Activated CD4-positive, alpha-beta T cell treated with anti-CD3 and anti-CD28 coated beads, Interleukin-2, amount 10 ng/mL, durations not matched to agents 24 days and 14 days (primary cell): ENCODE measurements at regions of chr1 and their contacts with region 1.

Region 1: GRCh38 chr1:66137235-66137634 is 344.5 kb downstream of the PDE4B start:
- DNase-seq: no peak
- H3K4me3 Mint-ChIP-seq: no peak overlapping the region
- H3K27ac Mint-ChIP-seq: no peak overlapping the region
- H3K4me1 Mint-ChIP-seq: peaks cover 3% of the 10 kb centered on the region
- H3K27me3 Mint-ChIP-seq: peaks cover 5% of the 10 kb centered on the region

Region 2: DNA sequence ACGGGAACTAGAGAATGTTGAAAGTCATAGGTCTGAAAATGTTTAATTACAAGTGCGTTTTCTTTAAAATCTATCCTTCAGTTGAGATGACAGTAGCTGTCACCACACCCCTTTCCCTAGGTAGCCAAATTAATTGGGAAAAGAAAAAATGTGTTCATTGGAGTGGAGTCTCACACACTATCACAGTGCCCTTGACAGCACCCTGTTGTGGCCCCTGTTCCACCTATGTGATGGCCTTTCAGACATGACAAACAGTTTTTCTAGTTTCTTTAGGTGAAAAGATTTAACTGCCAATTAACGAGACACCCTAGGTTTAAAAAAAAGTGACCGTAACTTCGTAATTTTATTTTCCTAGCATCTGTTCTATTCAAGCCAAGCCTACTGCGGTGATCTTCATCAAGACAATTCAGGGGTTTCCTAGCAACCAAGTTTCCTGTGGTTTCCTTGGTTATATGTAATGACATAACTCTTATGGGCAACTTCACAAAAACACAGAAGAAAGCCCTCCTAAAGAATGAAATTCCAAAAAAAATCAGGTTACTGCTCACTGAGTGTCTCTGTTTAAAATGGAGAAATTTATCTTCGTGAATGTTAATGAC is 46.3 kb before region 1 on chr1:
- intact Hi-C with region 1: no loop called
- DNase-seq: peak; percentile 69
- H3K4me3 Mint-ChIP-seq: no peak overlapping the region
- H3K27ac Mint-ChIP-seq: no peak overlapping the region
- H3K4me1 Mint-ChIP-seq: peaks cover 2% of the 10 kb centered on the region
- H3K27me3 Mint-ChIP-seq: peaks cover 4% of the 10 kb centered on the region

Region 3: DNA sequence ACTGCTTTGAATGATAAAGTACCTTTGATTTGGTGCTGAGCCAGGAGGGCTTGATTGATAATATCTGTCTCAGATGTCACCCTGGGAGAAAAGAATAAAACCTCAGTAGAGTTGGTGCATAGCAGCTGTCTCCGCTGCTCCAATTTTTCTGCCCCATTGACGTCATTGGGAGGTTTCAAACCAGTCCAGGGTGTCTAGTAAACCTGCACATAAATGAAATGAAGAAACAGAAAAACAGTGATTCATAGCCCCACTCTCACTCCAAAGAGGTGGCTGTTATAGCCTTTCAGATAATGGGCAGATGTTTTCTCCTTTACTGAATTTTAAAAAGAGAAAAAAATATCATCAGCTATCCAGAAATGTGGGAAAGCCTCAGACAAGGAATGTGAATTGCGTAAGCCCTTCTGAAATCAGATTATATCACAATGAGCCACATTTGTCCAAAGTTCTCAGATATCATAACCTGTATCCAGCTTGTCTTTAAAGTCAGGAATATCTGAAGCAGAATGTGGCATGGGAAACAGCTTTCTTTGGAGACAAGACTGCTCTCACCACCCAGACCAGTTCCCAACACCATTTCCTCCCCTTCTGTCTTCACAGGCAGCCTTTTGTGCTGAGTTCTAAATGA is 45.4 kb after region 1 on chr1:
- intact Hi-C with region 1: loop called (anchors 5 kb)
- DNase-seq: peak; percentile 84
- H3K4me3 Mint-ChIP-seq: peak overlapping the region; percentile 52
- H3K27ac Mint-ChIP-seq: peak overlapping the region; percentile 52
- H3K4me1 Mint-ChIP-seq: peaks cover 29% of the 10 kb centered on the region
- H3K27me3 Mint-ChIP-seq: peaks cover 1% of the 10 kb centered on the region